B cell (primary cell): ENCODE measurements at regions of chr3 and their contacts with region 1.

Region 1: GRCh38 chr3:46208167-46208704 is at the start of gene CCR1:
- DNase-seq: peak; percentile 60
- ATAC-seq: peak; percentile 82
- H3K4me3 ChIP-seq: peak within 1 kb of the TSS in 4 of 5 experiments; percentile 4 to 51 (median 11)
- H3K4me3 Mint-ChIP-seq: peak within 1 kb of the TSS; percentile 40
- H3K27ac ChIP-seq: no peak within 1 kb of the TSS
- H3K27ac Mint-ChIP-seq: peak within 1 kb of the TSS; percentile 70
- H3K4me1 ChIP-seq: peaks cover 25 to 38% of the 10 kb centered on the region in 2 donors
- H3K4me1 Mint-ChIP-seq: peaks cover 45% of the 10 kb centered on the region
- H3K27me3 ChIP-seq: no peaks in the 10 kb centered on the region
- H3K27me3 Mint-ChIP-seq: no peaks in the 10 kb centered on the region
- CTCF ChIP-seq: peak; percentile 64
- total RNA-seq, gene CCR1: 0.79 and 1.1 TPM in 2 replicates

Region 2: GRCh38 chr3:45387636-45388348 is 820.4 kb before region 1 on chr3:
- CTCF ChIA-PET with region 1: no interaction called
- POLR2A ChIA-PET with region 1: no interaction called
- intact Hi-C with region 1: no loop called
- DNase-seq: peak; percentile 8
- ATAC-seq: peak; percentile 4
- H3K4me3 ChIP-seq: peak overlapping the region; percentile 26 to 97 (median 88)
- H3K4me3 Mint-ChIP-seq: peak overlapping the region; percentile 98
- H3K27ac ChIP-seq: peak overlapping the region in 1 of 2 donors; percentile 68
- H3K27ac Mint-ChIP-seq: peak overlapping the region; percentile 96
- H3K4me1 ChIP-seq: peaks cover 13 to 15% of the 10 kb centered on the region in 2 donors
- H3K4me1 Mint-ChIP-seq: peaks cover 19% of the 10 kb centered on the region
- H3K27me3 ChIP-seq: no peaks in the 10 kb centered on the region
- H3K27me3 Mint-ChIP-seq: peaks cover 20% of the 10 kb centered on the region
- CTCF ChIP-seq: no peak

Region 3: GRCh38 chr3:45938864-45939263 is 269.4 kb before region 1 on chr3:
- CTCF ChIA-PET with region 1: interaction called, 31 read pairs
- POLR2A ChIA-PET with region 1: no interaction called
- intact Hi-C with region 1: loop called (anchors 5 kb)
- DNase-seq: peak; percentile 86
- ATAC-seq: peak; percentile 79
- H3K4me3 ChIP-seq: no peak overlapping the region
- H3K4me3 Mint-ChIP-seq: no peak overlapping the region
- H3K27ac ChIP-seq: no peak overlapping the region
- H3K27ac Mint-ChIP-seq: no peak overlapping the region
- H3K4me1 ChIP-seq: peaks cover 0 to 5% of the 10 kb centered on the region in 2 donors
- H3K4me1 Mint-ChIP-seq: no peaks in the 10 kb centered on the region
- H3K27me3 ChIP-seq: no peaks in the 10 kb centered on the region
- H3K27me3 Mint-ChIP-seq: no peaks in the 10 kb centered on the region
- CTCF ChIP-seq: peak; percentile 86

Region 4: GRCh38 chr3:46098319-46098761 is 109.9 kb before region 1 on chr3:
- CTCF ChIA-PET with region 1: interaction called, 17 read pairs
- POLR2A ChIA-PET with region 1: no interaction called
- intact Hi-C with region 1: no loop called
- DNase-seq: peak; percentile 58
- ATAC-seq: peak; percentile 13
- H3K4me3 ChIP-seq: peak overlapping the region in 3 of 5 experiments; percentile 27 to 46 (median 37)
- H3K4me3 Mint-ChIP-seq: peak overlapping the region; percentile 73
- H3K27ac ChIP-seq: peak overlapping the region; percentile 30 to 65
- H3K27ac Mint-ChIP-seq: peak overlapping the region; percentile 95
- H3K4me1 ChIP-seq: peaks cover 61 to 68% of the 10 kb centered on the region in 2 donors
- H3K4me1 Mint-ChIP-seq: peaks cover 69% of the 10 kb centered on the region
- H3K27me3 ChIP-seq: no peaks in the 10 kb centered on the region
- H3K27me3 Mint-ChIP-seq: no peaks in the 10 kb centered on the region
- CTCF ChIP-seq: no peak

Region 5: DNA sequence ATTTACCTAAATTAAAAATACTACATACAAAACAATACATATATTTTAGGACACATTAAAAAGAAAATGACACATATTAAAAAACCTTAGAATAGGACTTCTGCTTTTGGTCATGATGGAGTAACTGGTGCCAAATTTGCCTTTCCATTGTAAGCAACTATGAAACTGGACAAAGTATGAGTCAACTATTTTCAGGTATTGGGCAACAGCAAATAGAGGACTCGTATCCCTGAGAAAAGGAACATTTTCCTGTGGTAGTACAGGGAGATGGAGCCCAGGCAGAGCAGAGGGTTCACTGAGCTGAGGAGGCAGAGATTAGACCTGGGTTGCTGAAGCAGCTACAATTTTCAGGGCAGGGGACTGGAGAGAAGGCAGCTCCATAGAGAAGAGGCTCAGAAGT is 14.8 kb before region 1 on chr3:
- CTCF ChIA-PET with region 1: interaction called, 13 read pairs
- POLR2A ChIA-PET with region 1: no interaction called
- intact Hi-C with region 1: no loop called
- DNase-seq: no peak
- ATAC-seq: no peak
- H3K4me3 ChIP-seq: no peak overlapping the region
- H3K4me3 Mint-ChIP-seq: no peak overlapping the region
- H3K27ac ChIP-seq: no peak overlapping the region
- H3K27ac Mint-ChIP-seq: no peak overlapping the region
- H3K4me1 ChIP-seq: peaks cover 3 to 8% of the 10 kb centered on the region in 2 donors
- H3K4me1 Mint-ChIP-seq: peaks cover 10% of the 10 kb centered on the region
- H3K27me3 ChIP-seq: no peaks in the 10 kb centered on the region
- H3K27me3 Mint-ChIP-seq: no peaks in the 10 kb centered on the region
- CTCF ChIP-seq: no peak

Region 6: DNA sequence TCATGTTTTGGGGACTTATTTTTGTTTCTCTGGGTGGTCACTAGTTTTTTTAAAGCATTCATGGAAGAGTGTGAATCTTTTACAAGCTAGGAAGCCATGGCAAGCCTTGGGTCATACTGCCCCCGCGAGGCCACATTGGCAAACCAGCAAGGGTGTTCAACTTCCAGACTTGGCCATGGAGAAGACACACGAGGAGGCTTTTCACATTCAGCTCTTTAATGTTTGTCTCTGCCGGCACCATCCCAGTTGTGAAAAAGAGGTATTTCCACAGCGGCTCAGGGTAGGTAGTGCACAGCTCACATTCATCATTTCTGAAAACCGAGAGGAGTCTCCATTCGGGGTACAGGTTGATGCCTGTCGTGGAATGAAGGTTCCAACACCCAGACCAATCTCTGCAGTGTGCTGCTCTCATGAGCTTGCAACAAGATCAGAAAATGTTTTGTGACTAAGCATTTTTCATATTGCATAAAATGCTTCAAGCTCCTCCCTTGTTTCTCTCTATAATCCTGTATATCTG is 170.2 kb after region 1 on chr3:
- CTCF ChIA-PET with region 1: interaction called, 19 read pairs
- POLR2A ChIA-PET with region 1: interaction called, 4 read pairs
- intact Hi-C with region 1: no loop called
- DNase-seq: peak; percentile 64
- ATAC-seq: peak; percentile 51
- H3K4me3 ChIP-seq: no peak overlapping the region
- H3K4me3 Mint-ChIP-seq: no peak overlapping the region
- H3K27ac ChIP-seq: no peak overlapping the region
- H3K27ac Mint-ChIP-seq: peak overlapping the region; percentile 5
- H3K4me1 ChIP-seq: peaks cover 24 to 30% of the 10 kb centered on the region in 2 donors
- H3K4me1 Mint-ChIP-seq: peaks cover 41% of the 10 kb centered on the region
- H3K27me3 ChIP-seq: peaks cover 0 to 2% (median 0%) of the 10 kb centered on the region in 4 experiments
- H3K27me3 Mint-ChIP-seq: peaks cover 3% of the 10 kb centered on the region
- CTCF ChIP-seq: peak; percentile 72